ENCODE measurements at regions of chr3 and their contacts with region 1.

Region 1: DNA sequence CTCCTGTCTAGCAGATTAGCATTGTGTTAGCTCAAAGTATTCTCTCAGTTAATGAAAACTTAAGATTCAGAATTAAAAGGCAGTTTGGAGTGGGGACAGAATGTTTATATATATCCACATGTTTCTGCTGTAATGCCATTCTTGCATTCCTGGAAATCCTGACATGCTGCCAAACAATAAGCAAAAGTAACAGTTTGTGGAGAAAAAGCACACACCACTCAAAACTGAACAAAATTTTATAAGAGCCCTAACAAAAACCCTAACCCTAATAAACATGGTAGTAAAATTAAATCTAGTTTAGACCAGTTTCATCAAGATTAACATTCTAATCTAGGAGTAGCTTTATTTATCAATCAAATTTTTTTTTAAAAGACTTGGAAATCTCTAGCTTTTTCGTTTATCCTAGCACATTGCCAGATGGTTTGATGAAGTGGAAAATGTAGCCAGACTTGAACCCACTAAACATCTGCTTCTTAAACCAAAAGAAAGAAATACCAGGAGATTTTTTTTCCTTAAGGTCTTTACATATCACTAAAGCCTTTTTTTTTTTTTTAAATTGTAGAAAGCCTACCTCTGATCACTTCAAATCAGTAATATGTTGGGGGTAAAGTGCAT is 3.7 kb downstream of the TCAIM start:
- DNase-seq: no peak
- H3K4me3 ChIP-seq: no peak overlapping the region
- H3K27ac ChIP-seq: no peak overlapping the region
- H3K4me1 ChIP-seq: peaks cover 8 to 32% of the 10 kb centered on the region in 2 donors
- H3K27me3 ChIP-seq: no peaks in the 10 kb centered on the region
- CTCF ChIP-seq: no peak
- POLR2A ChIP-seq: no peak

Region 2: DNA sequence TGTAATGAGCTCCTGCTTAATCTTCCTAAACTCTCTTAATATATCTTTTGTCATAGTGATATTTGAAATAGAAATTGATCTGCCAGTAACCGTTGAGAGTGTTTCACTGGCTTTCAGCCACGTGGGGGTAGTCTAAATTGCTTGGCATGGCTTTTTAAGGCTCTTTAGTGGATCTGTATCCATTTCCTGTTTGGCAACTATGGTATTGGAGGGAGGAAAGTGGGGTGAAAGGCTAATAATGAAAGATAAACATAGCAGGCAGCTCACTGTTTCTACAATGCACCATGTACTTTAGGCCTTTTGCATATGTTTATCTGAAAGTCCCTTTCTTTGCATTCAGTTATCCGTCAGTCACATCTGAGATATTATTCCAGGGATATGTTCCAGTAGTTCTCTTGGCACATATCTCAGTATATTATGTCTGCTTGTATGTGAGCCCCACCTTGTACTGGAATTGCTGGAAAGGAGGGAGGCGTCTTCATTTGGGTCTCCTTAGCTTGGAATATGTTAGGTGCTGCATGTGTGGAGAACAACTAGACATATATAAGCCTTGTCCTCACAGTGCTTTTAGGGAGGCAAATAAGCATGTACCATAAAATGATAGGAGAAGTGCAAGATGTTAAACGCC is 89.8 kb before region 1 on chr3:
- intact Hi-C with region 1: no loop called
- DNase-seq: no peak
- H3K4me3 ChIP-seq: no peak overlapping the region
- H3K27ac ChIP-seq: no peak overlapping the region
- H3K4me1 ChIP-seq: no peaks in the 10 kb centered on the region
- H3K27me3 ChIP-seq: no peaks in the 10 kb centered on the region
- CTCF ChIP-seq: no peak
- POLR2A ChIP-seq: no peak

Region 3: DNA sequence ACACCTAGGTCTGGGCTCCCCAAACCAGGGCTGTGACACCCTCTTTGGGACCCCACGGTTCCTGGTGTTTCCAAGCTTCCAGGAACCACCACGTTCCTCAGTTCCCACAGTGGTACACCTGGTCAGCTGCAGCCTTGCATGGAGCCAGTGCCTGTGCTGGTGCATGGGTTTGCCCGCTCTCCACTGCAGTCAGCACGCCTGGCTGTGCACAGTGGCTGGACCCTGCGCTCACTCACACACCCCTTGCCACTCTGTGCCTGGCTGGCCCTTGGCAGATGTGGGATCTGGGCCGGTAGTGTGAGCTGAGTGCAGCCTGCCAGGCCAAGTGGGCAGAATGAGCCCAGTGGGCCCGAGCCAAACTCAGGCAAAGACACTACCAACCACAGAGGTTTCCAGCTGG is 45.1 kb after region 1 on chr3:
- intact Hi-C with region 1: no loop called
- DNase-seq: no peak
- H3K4me3 ChIP-seq: no peak overlapping the region
- H3K27ac ChIP-seq: no peak overlapping the region
- H3K4me1 ChIP-seq: no peaks in the 10 kb centered on the region
- H3K27me3 ChIP-seq: no peaks in the 10 kb centered on the region
- CTCF ChIP-seq: no peak
- POLR2A ChIP-seq: no peak

Region 4: GRCh38 chr3:44477312-44478030 is 135.2 kb after region 1 on chr3 and contains the start of gene ZNF445:
- intact Hi-C with region 1: loop called in 1 of 2 experiments (anchors 5 kb)
- DNase-seq: peak; percentile 75 to 83 (median 76)
- H3K4me3 ChIP-seq: peak within 1 kb of the TSS; percentile 7 to 95 (median 40)
- H3K27ac ChIP-seq: peak within 1 kb of the TSS in 4 of 5 donors; percentile 40 to 91 (median 72)
- H3K4me1 ChIP-seq: peaks cover 12 to 24% of the 10 kb centered on the region in 2 donors
- H3K27me3 ChIP-seq: no peaks in the 10 kb centered on the region
- CTCF ChIP-seq: no peak
- POLR2A ChIP-seq: peak in 1 of 2 donors; percentile 35
- total RNA-seq, gene ZNF445: 5.8 to 21.1 (median 10.0) TPM

Measured in adrenal gland (tissue), 19 donors.